ENCODE measurements at regions of chr2 and their contacts with region 1.

Region 1: GRCh38 chr2:73828818-73829570 is at the start of gene STAMBP:
- DNase-seq: peak; percentile 67
- H3K4me3 ChIP-seq: peak within 1 kb of the TSS; percentile 63 to 97 (median 80)
- H3K27ac ChIP-seq: peak within 1 kb of the TSS; percentile 93 to 99 (median 98)
- H3K4me1 ChIP-seq: peaks cover 28 to 54% (median 29%) of the 10 kb centered on the region in 3 donors
- H3K27me3 ChIP-seq: no peaks in the 10 kb centered on the region
- CTCF ChIP-seq: no peak
- POLR2A ChIP-seq: peak in 3 of 4 donors; percentile 32 to 88 (median 62)
- total RNA-seq, gene STAMBP: 23.5 to 36.8 (median 32.5) TPM

Region 2: GRCh38 chr2:72813841-72814240 is 1015.2 kb before region 1 on chr2:
- intact Hi-C with region 1: no loop called
- DNase-seq: no peak
- H3K4me3 ChIP-seq: no peak overlapping the region
- H3K27ac ChIP-seq: no peak overlapping the region
- H3K4me1 ChIP-seq: peaks cover 0 to 25% (median 0%) of the 10 kb centered on the region in 3 donors
- H3K27me3 ChIP-seq: no peaks in the 10 kb centered on the region
- CTCF ChIP-seq: no peak
- POLR2A ChIP-seq: no peak

Region 3: DNA sequence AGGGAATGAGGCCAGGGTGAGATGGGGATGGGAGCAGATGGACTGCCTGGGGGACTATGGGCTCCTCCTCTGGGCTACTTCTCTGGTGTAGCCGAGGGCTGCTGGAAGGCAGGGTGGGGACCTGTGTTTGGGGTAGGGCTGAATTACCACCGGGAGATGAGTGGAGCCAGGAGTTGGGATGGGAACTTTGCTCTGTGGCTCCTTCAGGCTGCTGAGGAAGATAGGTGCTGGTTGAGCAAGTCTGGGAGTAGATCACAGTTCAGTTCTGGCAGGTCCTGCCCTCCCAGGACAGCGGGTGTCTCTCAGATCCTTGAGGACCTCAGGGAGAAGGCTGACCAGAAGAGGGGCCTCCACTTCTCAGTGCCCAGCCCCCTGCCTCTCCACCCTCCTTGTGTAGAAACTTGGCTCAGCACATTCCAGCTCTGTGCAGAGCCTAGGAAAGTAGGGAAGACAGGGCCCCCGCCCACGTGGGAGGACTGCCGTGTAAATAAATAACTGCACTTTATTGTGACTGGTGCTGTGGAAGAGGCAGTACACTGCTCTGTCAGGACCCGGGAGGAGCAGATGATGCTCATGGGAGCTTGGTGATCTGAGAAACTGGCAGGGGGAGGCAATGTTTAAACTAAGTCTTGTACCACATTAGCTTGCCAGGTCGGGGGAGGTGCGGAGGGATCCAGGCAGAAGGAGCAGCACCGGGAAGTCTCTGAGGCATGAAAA is 171.0 kb after region 1 on chr2:
- intact Hi-C with region 1: loop called (anchors 10 kb)
- DNase-seq: no peak
- H3K4me3 ChIP-seq: no peak overlapping the region
- H3K27ac ChIP-seq: peak overlapping the region in 1 of 4 donors; percentile 45
- H3K4me1 ChIP-seq: peaks cover 38 to 80% (median 43%) of the 10 kb centered on the region in 3 donors
- H3K27me3 ChIP-seq: no peaks in the 10 kb centered on the region
- CTCF ChIP-seq: no peak
- POLR2A ChIP-seq: no peak

Region 4: GRCh38 chr2:74147727-74148456 is 318.9 kb after region 1 on chr2 and contains the start of gene BOLA3:
- intact Hi-C with region 1: loop called (anchors 10 kb)
- DNase-seq: no peak
- H3K4me3 ChIP-seq: peak within 1 kb of the TSS; percentile 66 to 98 (median 76)
- H3K27ac ChIP-seq: peak within 1 kb of the TSS; percentile 73 to 82 (median 76)
- H3K4me1 ChIP-seq: peaks cover 9 to 32% (median 18%) of the 10 kb centered on the region in 3 donors
- H3K27me3 ChIP-seq: no peaks in the 10 kb centered on the region
- CTCF ChIP-seq: peak; percentile 56 to 90 (median 68)
- POLR2A ChIP-seq: peak in 2 of 4 donors; percentile 20 to 24
- total RNA-seq, gene BOLA3: 27.1 to 69.3 (median 40.8) TPM